Activated T-helper 1 cell treated with anti-CD3 and anti-CD28 coated beads, Interleukin-12 subunit alpha, Interleukin-12 subunit beta, Interleukin-2, Interleukin-4 antibody, amounts not matched to agents 30 ng/mL and 10 ng/mL and 1 ng/mL, durations not matched to agents 14 hours and 24 hours and 36 hours (primary cell): ENCODE measurements at regions of chr6 and their contacts with region 1.

Region 1: DNA sequence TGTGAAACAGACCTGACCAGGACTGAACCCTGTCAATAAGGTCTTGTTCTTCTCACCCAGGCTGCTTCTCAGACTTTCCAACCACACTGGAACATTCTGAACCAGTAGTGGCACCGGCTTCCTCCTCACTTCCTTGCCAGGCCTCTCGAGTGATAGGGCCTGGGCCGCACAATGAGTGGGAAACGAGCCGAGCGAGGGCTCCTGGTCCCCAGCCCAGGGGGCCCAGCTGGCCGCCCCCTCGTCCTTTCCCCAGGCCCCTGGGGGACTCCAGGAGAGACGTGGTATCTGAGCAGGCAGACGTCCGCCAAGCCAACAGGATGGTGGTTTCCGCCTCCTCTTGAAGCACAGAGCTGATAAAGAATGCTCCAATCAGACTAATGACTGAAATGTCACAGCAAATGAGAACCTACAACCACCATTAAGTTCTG is 117.9 kb downstream of the GMDS start:
- DNase-seq: peak; percentile 14
- H3K4me3 Mint-ChIP-seq: peak overlapping the region; percentile 32
- H3K27ac Mint-ChIP-seq: peak overlapping the region; percentile 76
- H3K4me1 Mint-ChIP-seq: peaks cover 35% of the 10 kb centered on the region
- H3K27me3 Mint-ChIP-seq: no peaks in the 10 kb centered on the region

Region 2: DNA sequence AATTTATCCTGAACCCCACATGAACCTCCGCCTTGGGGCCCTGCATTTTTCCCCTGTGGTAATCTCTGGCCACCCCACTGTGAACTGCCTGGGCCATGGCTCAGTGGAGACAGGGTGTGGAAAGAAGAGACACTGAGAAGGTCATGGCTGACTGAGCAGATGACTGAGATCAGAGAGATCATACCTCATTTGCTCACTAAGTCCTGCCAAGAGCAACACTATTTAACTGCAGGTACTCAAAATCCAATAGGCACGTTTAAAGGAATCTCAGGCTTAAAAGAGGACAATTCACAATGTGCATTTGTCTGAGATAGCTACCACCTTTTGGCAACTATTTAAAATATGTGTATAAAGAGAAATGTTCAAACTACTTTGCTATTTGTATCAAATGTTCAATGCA is 187.1 kb before region 1 on chr6:
- intact Hi-C with region 1: no loop called
- DNase-seq: no peak
- H3K4me3 Mint-ChIP-seq: no peak overlapping the region
- H3K27ac Mint-ChIP-seq: no peak overlapping the region
- H3K4me1 Mint-ChIP-seq: no peaks in the 10 kb centered on the region
- H3K27me3 Mint-ChIP-seq: no peaks in the 10 kb centered on the region

Region 3: DNA sequence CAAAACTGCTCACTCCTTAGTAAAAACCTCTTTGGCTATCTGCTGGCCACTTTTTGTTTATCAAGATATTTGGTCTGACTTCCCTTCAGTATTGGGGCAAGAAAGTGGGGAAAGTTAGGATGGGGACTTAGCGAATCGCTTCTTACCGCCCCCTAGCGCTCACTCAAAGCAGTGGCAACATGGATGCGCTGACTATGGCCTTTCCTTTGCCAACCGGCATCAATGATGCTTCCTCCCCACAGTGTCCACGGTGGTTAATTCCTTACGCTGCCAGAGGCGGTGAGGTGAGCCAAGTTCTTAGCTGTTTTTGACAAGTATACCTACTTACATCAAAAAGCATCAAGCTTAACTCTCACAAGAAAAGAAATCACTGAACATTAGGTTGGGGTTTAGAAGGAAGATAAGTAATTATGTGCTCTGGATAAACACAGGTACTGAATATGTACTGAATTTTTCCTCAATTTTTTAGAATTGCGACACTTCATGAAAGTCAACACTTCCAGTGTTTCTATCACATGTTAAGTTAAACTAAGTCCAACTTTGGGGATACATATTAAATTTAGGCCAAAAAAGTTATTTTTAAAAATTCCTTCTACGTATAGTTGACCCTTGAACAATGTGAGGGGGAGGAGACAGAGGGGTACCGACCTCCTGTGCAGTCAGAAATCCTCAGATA is 31.2 kb after region 1 on chr6:
- intact Hi-C with region 1: loop called (anchors 1 kb)
- DNase-seq: no peak
- H3K4me3 Mint-ChIP-seq: no peak overlapping the region
- H3K27ac Mint-ChIP-seq: no peak overlapping the region
- H3K4me1 Mint-ChIP-seq: peaks cover 48% of the 10 kb centered on the region
- H3K27me3 Mint-ChIP-seq: no peaks in the 10 kb centered on the region

Region 4: DNA sequence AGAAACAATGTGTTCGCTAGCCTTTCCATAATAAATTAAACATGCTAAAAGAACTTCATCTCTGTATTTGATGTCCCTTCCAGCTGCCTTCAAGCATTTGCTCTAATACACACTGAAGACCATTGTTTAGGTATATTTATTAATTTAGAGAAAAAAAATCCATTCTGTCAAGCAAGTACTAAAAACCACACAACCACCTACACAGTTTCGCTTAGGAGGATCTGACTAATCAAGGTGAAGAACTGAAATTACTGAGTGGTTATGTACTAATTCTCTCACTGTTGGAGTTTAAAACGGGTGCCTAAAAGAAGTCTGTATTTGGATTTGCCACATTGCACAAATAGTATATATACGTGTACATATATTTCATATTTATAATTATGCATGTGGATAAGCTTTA is 59.0 kb after region 1 on chr6:
- intact Hi-C with region 1: loop called (anchors 1 kb)
- DNase-seq: no peak
- H3K4me3 Mint-ChIP-seq: no peak overlapping the region
- H3K27ac Mint-ChIP-seq: peak overlapping the region; percentile 65
- H3K4me1 Mint-ChIP-seq: peaks cover 20% of the 10 kb centered on the region
- H3K27me3 Mint-ChIP-seq: peaks cover 6% of the 10 kb centered on the region

Region 5: GRCh38 chr6:3489027-3489757 is 1361.7 kb after region 1 on chr6:
- intact Hi-C with region 1: no loop called
- DNase-seq: no peak
- H3K4me3 Mint-ChIP-seq: no peak overlapping the region
- H3K27ac Mint-ChIP-seq: no peak overlapping the region
- H3K4me1 Mint-ChIP-seq: no peaks in the 10 kb centered on the region
- H3K27me3 Mint-ChIP-seq: no peaks in the 10 kb centered on the region